Esophagus muscularis mucosa (tissue), 4 donors: ENCODE measurements at regions of chr7 and their contacts with region 1.

Region 1: GRCh38 chr7:27143023-27143949 is at the start of gene HOXA5:
- DNase-seq: peak; percentile 94
- H3K4me3 ChIP-seq: peak within 1 kb of the TSS; percentile 83 to 96 (median 90)
- H3K27ac ChIP-seq: peak within 1 kb of the TSS; percentile 96 to 99 (median 99)
- H3K4me1 ChIP-seq: peaks cover 19 to 43% (median 41%) of the 10 kb centered on the region in 4 donors
- H3K27me3 ChIP-seq: peaks cover 0 to 42% (median 13%) of the 10 kb centered on the region in 4 donors
- CTCF ChIP-seq: peak; percentile 95 to 98 (median 95)
- EP300 ChIP-seq: peak; percentile 66
- POLR2A ChIP-seq: peak; percentile 25
- total RNA-seq, gene HOXA5: 7.8 to 24.8 (median 14.7) TPM

Region 2: DNA sequence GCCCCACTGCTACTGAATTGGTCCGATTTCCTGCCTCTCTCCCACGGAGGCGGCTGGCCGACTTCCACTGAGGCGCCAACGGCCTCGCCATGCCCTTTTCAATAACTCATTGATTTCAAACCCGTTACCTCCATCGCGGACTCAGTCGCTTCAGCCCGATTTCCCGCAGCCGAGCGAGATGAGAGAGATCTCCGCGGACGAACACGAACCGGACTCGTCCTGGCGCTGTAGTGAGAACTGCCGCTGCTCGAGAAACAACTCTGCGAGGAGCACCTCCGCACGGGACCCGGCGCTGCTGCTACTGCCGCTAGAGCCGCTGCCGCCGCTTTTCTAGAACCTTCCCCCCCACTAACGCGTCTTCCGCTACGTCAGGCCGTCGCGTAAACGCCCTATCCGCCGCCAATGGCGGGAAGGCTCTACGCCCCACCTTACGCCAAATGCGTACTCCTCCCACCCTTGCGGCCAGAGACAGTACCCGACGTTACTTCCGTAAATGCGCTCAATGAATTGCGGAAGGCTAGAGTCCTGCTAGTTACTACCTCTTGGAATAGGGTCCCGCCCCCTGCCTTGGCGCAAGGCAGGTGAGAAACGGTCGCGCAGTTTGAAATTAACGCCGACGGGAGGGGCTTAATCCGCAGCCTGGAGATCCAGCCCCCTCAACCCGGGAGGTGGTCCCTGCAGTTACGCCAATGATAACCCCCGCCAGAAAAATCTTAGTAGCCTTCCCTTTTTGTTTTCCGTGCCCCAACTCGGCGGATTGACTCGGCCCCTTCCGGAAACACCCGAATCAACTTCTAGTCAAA is 942.6 kb before region 1 on chr7 and contains the start of gene HNRNPA2B1:
- intact Hi-C with region 1: loop called (anchors 10 kb)
- DNase-seq: peak; percentile 99
- H3K4me3 ChIP-seq: peak within 1 kb of the TSS; percentile 95 to 98 (median 96)
- H3K27ac ChIP-seq: peak within 1 kb of the TSS; percentile 99 to 100 (median 100)
- H3K4me1 ChIP-seq: peaks cover 46 to 56% (median 55%) of the 10 kb centered on the region in 4 donors
- H3K27me3 ChIP-seq: no peaks in the 10 kb centered on the region
- CTCF ChIP-seq: peak in 1 of 3 experiments; percentile 19
- EP300 ChIP-seq: peak; percentile 44
- POLR2A ChIP-seq: peak; percentile 100
- total RNA-seq, gene HNRNPA2B1: 158 to 220 (median 202) TPM

Region 3: GRCh38 chr7:26760501-26760900 is 382.8 kb before region 1 on chr7:
- intact Hi-C with region 1: no loop called
- DNase-seq: no peak
- H3K4me3 ChIP-seq: no peak overlapping the region
- H3K27ac ChIP-seq: no peak overlapping the region
- H3K4me1 ChIP-seq: no peaks in the 10 kb centered on the region
- H3K27me3 ChIP-seq: no peaks in the 10 kb centered on the region
- CTCF ChIP-seq: no peak
- EP300 ChIP-seq: no peak
- POLR2A ChIP-seq: no peak

Region 4: DNA sequence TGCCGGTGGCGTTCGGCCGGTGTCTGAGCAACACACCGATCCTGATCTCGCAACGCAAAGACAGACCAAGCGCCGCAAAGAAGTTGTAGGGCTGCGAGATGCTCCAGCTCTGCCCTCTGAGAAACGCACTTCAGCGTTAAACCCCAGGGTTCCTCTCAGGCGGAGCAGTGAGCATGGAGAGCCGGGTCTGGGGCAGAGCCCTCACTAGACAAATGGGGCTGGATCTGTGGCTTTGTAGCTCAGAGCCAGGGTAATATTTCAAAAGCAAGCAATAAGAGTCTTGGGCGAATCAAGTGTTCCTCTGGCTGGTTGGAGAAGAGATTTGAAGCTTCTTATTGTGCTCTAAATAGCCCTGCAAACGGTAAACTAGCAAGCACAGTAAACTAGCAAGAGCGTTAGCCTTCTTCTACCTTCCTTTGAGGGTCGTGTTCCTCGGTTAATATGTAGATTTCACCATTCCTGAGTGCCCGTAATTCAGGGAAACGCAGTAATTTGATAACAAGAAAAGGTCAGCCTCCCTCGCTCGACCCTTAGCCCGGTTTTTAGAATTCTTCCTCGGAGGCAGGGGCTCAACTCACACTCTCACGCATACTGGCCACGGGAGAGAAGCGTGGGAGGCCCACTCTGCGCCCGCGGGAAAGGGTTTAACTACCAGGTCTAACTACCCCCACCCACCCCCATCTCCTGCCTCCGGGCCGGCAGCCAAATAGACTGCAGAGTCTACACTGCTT is 285.6 kb before region 1 on chr7:
- intact Hi-C with region 1: loop called (anchors 2 kb)
- DNase-seq: no peak
- H3K4me3 ChIP-seq: peak overlapping the region; percentile 43 to 50 (median 44)
- H3K27ac ChIP-seq: peak overlapping the region; percentile 76 to 96 (median 84)
- H3K4me1 ChIP-seq: peaks cover 0 to 73% (median 61%) of the 10 kb centered on the region in 4 donors
- H3K27me3 ChIP-seq: no peaks in the 10 kb centered on the region
- CTCF ChIP-seq: no peak
- EP300 ChIP-seq: no peak
- POLR2A ChIP-seq: no peak

Region 5: DNA sequence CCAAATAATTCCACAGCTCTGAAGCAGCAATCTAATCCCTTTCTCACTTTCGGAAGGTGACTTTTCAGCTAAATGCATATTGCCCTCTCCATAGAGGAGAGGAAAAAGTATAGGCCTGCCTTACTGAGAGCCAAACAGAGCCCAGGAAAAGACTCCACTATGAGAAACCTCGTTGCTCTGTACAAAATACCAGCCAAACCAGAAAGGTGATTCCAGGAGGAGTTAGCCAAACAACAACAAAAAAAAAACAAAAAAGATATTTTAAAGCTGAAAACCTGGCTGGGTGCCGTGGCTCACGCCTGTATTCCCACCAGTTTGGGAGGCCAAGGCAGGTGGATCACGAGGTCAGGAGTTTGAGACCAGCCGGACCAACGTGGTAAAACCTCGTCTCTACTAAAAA is 118.0 kb before region 1 on chr7:
- intact Hi-C with region 1: loop called (anchors 10 kb)
- DNase-seq: no peak
- H3K4me3 ChIP-seq: no peak overlapping the region
- H3K27ac ChIP-seq: no peak overlapping the region
- H3K4me1 ChIP-seq: no peaks in the 10 kb centered on the region
- H3K27me3 ChIP-seq: no peaks in the 10 kb centered on the region
- CTCF ChIP-seq: no peak
- EP300 ChIP-seq: no peak
- POLR2A ChIP-seq: no peak